A549 (cell line): ENCODE measurements at regions of chr5 and their contacts with region 1.

Region 1: DNA sequence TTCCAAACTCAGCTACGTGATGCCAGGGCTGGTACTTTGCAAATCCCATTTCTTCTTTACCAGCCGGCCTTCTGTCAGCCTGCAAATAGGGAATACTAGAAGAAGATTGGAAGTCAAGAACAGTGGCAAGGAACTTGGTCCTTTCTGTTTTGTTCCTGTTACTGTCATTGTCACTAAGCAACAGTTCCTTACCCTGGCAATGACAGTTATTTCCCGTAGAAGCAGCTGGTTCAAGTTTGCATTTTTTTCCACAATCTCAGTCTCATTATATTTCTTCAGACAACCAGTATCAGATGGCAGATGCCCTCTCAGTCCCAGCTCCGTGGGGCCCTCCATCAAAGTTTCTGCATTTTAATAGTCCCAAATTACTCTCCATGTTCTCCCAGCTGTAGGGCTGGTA is 9.1 kb upstream of the C1QTNF2 start:
- DNase-seq: no peak
- ATAC-seq: no peak
- H3K4me3 ChIP-seq: no peak overlapping the region
- H3K27ac ChIP-seq: no peak overlapping the region
- H3K4me1 ChIP-seq: no peaks in the 10 kb centered on the region
- CTCF ChIP-seq: no peak
- EP300 ChIP-seq: no peak
- POLR2A ChIP-seq: no peak
- RAD21 ChIP-seq: no peak

Region 2: DNA sequence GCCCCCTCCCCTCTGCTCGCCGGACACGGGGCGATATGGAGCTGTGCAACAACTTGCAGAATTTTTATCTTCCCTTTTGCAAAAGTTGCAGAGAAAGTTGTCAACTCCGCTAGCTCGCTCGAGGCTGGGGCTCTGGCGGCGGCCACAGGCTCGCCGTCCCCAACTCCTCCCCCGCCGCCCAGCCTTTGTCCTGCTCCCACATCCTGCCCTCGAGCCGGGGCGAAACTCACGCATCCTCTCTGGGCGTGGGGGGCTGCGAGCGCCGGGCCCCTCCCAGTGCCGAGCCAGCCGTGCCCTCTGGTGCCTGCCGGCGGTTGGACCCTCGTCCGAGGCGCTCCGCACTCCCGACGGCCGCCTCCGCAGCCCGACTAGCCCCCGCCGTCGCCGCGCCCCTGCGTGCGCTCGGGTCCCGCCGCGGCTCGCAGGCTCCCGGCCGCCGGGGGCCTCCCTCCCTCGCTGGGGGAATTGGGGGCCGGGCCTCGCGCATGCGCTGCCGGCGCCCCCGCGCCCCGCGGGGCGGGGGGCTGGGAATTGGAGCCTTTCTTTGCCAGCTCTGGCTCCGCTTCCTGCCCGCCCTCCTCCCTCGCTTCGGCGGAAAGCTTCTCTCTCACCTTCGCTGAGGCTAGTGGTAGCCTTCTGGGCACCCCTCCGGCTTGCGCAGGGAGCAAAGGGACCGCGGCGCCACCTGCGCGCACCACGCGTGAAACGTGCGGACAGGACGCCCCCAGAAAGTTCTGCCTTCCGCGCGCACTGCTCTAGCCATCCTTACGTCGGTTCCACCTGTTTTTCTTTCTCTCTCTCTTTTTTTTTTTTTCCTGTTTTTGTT is 67.2 kb before region 1 on chr5 and contains the start of gene CCNJL:
- CTCF ChIA-PET with region 1: no interaction called
- POLR2A ChIA-PET with region 1: no interaction called
- DNase-seq: peak; percentile 62 to 86
- ATAC-seq: peak; percentile 69 to 77
- H3K4me3 ChIP-seq: peak within 1 kb of the TSS; percentile 80
- H3K27ac ChIP-seq: peak within 1 kb of the TSS; percentile 89 to 91
- H3K4me1 ChIP-seq: peaks cover 46% of the 10 kb centered on the region
- CTCF ChIP-seq: no peak
- EP300 ChIP-seq: no peak
- POLR2A ChIP-seq: peak; percentile 57
- RAD21 ChIP-seq: no peak
- polyA plus RNA-seq, gene CCNJL: 16.2 and 16.8 TPM in 2 replicates

Region 3: DNA sequence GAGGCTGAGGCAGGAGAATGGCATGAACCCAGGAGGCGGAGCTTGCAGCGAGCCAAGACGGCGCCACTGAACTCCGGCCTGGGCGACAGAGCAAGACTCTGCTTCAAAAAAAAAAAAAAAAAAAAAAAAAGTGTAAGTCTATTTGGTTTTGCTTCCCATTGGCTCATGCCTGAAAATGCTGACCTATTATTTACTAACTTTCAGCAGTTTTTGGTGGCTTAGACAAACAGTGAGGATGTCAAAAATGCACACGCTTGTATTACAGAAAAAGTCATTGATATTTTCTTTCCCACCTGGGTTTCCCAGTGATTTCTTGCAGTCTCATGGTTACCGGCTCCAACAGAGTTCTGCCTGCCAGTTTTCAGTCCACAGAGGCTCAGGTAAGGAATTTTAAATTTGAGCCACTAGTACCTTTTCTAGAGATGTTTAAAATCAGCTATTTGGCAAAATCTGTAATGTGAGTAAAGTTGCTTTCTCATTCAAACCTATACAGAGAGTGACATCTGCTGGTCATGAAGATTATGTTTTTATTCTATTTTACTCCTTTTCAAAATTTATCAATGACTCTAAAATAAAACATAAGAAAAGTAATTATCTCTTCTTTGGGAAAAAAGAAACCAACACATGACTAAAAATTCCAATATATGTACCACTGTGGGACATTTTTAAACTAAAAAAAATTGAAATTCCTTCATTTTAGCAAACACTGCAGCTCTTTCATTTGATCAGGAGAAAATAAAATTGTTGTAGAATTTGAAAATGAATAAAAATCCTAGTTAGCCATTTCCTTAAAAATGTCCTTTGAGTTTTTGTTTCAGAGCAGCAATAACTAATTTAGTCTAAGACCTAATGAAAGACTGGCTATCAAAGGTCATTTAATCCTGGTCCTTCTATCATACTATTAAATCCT is 11.5 kb after region 1 on chr5:
- CTCF ChIA-PET with region 1: interaction called, 31 read pairs
- POLR2A ChIA-PET with region 1: no interaction called
- DNase-seq: peak in 1 of 2 experiments; percentile 32
- ATAC-seq: peak; percentile 47 to 69; a peak in 3 of 6 replicates
- H3K4me3 ChIP-seq: no peak overlapping the region
- H3K27ac ChIP-seq: no peak overlapping the region
- H3K4me1 ChIP-seq: no peaks in the 10 kb centered on the region
- CTCF ChIP-seq: peak; percentile 75
- EP300 ChIP-seq: no peak
- POLR2A ChIP-seq: no peak
- RAD21 ChIP-seq: peak; percentile 73 to 79